GM10248 (cell line): ENCODE measurements at regions of chr1 and their contacts with region 1.

Region 1: DNA sequence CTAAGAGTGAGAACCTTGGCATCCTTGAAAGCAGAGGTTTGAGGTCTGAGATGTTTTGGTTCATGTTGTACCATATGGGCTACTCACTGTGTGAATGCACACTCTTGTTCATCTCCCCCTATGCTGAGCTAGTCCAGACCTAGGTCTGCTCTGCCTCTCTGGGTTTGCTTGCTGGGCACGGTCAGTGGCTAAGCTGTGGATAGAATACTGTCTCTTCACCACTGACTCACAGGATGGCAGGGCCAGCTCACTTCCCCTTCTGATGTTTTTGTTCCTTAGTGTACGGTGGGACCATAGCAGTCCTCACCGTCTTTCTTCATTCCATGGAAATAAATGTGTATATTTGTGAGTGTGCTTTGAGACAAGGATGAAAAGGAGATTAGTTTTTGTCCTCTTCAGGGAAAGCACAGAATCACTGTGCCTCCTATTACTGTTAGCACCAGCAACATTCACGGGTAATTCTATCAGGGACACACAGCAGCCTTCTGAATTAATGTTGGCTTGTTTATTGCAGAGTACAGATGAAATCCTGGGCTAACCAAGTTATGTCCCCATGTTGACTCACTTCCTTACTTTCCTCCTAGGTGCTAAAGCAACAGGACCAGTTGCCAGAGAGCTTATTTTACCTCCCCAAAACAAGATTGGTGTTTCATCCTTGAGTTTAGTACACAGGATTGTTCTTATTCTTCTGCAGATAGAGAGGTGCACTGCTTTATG is 56.9 kb upstream of the IVNS1ABP start:
- DNase-seq: no peak
- CTCF ChIP-seq: no peak

Region 2: GRCh38 chr1:185385991-185386390 is 12.0 kb after region 1 on chr1:
- CTCF ChIA-PET with region 1: interaction called, 14 read pairs
- POLR2A ChIA-PET with region 1: no interaction called
- DNase-seq: no peak
- CTCF ChIP-seq: no peak